ENCODE measurements at regions of chr2 and their contacts with region 1.

Region 1: GRCh38 chr2:241344925-241345651 is 11.0 kb upstream of the FARP2 start:
- DNase-seq: no peak
- H3K4me3 ChIP-seq: no peak overlapping the region
- H3K27ac ChIP-seq: no peak overlapping the region
- H3K4me1 ChIP-seq: no peaks in the 10 kb centered on the region
- H3K27me3 ChIP-seq: no peaks in the 10 kb centered on the region
- CTCF ChIP-seq: no peak
- POLR2A ChIP-seq: no peak

Region 2: DNA sequence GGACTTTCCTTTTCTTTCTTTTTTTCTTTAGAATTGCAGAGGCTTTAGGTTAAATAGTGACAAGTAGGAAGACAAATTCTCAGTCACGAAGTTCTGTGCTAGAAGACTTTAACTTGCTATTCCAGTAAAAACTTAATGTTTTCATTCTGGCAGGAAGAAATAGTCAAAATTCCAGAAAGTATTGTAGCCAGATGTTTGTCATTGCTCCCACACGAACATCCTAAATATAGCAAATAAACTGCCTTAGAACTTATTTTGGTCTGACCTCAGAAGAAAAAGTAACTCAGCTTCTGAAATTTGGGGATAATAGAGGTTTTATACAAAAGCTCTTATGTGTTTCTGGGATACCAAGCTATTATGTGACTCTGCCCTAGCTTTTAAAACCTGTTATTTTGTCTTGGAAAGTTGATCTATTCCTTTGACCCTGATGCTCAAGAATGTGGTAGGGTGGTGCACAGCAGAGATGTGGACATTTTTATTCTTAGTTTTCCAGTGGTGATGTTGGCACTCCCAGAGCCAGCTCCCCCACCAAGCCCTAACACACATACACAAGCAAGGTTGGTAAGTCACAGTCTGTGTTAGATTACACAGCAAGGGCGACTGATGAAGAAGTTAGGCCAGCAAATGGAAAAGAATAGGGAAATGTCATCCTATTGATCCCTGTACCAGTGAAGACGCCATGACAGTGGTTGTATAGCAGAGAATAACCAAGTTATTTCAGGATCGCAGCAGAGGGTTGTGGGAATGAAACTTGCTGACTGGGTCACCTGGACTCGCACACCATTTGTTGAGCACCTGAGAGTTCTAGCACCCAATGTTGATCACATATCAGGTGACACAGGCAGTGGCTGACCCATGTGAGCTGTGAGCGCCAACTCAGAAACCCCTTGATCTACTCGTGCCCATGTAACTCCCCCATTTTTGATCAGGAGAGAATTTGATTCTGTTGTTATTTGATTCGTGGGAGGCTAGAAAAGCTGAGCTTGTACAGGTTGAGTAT is 34.7 kb after region 1 on chr2:
- intact Hi-C with region 1: loop called (anchors 2 kb)
- DNase-seq: no peak
- H3K4me3 ChIP-seq: no peak overlapping the region
- H3K27ac ChIP-seq: peak overlapping the region; percentile 2 to 42
- H3K4me1 ChIP-seq: peaks cover 0 to 7% of the 10 kb centered on the region in 2 donors
- H3K27me3 ChIP-seq: no peaks in the 10 kb centered on the region
- CTCF ChIP-seq: no peak
- POLR2A ChIP-seq: no peak

Measured in breast epithelium (tissue), 4 donors.